ENCODE measurements at regions of chr1 and their contacts with region 1.

Region 1: DNA sequence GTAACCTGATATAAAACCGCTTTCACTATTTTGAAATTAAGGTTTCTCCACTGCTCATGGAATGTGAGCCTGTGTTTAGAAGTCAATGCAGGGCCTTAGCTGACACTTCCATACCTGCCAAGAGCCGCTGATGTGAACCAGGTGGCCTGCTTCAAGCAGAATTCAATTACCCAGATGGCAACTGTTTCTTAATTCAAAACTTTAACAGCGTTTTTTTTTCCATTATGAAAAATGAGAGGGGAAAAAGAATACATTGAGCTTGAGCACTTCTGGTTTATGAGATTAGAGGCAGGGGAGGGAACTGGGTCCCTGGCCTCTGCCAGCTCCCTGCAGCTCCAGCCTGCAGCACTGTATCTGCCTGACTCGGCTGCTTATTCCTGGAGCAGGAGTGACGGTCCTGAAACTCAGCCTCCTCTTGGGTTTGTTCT is 7.7 kb upstream of the ATP1A1 start:
- DNase-seq: no peak
- H3K4me3 ChIP-seq: no peak overlapping the region
- H3K27ac ChIP-seq: no peak overlapping the region
- H3K4me1 ChIP-seq: peaks cover 6 to 20% (median 15%) of the 10 kb centered on the region in 4 donors
- H3K27me3 ChIP-seq: no peaks in the 10 kb centered on the region
- CTCF ChIP-seq: no peak
- EP300 ChIP-seq: no peak
- POLR2A ChIP-seq: no peak

Region 2: GRCh38 chr1:116418091-116418830 is 52.9 kb after region 1 on chr1:
- intact Hi-C with region 1: loop called (anchors 5 kb)
- DNase-seq: no peak
- H3K4me3 ChIP-seq: peak overlapping the region; percentile 74 to 90 (median 86)
- H3K27ac ChIP-seq: peak overlapping the region; percentile 75 to 83 (median 79)
- H3K4me1 ChIP-seq: peaks cover 13 to 30% (median 23%) of the 10 kb centered on the region in 4 donors
- H3K27me3 ChIP-seq: no peaks in the 10 kb centered on the region
- CTCF ChIP-seq: peak in 1 of 3 experiments; percentile 24
- EP300 ChIP-seq: no peak
- POLR2A ChIP-seq: peak; percentile 38

Region 3: DNA sequence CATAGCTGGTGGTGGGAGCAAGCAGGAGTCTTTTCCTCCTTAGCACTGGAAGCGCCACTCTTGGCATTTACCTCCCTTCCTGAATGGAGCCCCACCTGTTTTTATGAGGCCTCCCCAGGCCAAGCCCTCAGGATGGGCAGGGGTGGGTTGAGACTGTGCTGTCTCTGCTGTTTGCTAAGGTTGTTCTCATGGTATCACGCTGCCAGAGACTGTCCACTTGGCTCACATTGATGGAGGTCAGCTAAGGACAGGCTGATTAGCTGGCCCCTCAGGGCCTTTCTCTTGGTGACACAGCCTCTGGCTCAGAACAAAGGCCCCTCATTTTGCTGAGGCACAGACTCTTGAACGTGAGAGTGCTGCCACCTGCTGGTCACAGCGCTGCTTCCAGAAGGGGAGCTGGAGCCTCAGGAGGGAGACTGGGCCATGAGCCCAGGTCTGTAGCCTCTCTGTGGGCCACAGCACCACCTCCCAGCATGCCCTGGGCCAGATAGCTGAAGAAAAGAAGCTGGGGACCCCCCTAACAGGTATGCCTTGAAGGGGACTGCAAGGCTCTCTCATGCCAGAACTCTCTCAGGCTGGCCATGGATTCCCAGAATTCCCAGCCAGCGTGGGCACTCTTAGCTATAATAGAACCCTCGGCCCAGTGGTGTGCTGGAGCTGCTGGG is 119.8 kb after region 1 on chr1:
- intact Hi-C with region 1: loop called (anchors 2 kb)
- DNase-seq: peak; percentile 94
- H3K4me3 ChIP-seq: no peak overlapping the region
- H3K27ac ChIP-seq: no peak overlapping the region
- H3K4me1 ChIP-seq: peaks cover 5 to 25% (median 8%) of the 10 kb centered on the region in 4 donors
- H3K27me3 ChIP-seq: peaks cover 0 to 4% (median 0%) of the 10 kb centered on the region in 4 donors
- CTCF ChIP-seq: peak; percentile 83 to 93 (median 84)
- EP300 ChIP-seq: no peak
- POLR2A ChIP-seq: no peak